Cardiac septum (tissue), 1 donor: ENCODE measurements at regions of chr7 and their contacts with region 1.

Region 1: GRCh38 chr7:135147899-135148721 is at the start of gene TMEM140:
- DNase-seq: no peak
- total RNA-seq, gene TMEM140: 15.2 TPM

Region 2: DNA sequence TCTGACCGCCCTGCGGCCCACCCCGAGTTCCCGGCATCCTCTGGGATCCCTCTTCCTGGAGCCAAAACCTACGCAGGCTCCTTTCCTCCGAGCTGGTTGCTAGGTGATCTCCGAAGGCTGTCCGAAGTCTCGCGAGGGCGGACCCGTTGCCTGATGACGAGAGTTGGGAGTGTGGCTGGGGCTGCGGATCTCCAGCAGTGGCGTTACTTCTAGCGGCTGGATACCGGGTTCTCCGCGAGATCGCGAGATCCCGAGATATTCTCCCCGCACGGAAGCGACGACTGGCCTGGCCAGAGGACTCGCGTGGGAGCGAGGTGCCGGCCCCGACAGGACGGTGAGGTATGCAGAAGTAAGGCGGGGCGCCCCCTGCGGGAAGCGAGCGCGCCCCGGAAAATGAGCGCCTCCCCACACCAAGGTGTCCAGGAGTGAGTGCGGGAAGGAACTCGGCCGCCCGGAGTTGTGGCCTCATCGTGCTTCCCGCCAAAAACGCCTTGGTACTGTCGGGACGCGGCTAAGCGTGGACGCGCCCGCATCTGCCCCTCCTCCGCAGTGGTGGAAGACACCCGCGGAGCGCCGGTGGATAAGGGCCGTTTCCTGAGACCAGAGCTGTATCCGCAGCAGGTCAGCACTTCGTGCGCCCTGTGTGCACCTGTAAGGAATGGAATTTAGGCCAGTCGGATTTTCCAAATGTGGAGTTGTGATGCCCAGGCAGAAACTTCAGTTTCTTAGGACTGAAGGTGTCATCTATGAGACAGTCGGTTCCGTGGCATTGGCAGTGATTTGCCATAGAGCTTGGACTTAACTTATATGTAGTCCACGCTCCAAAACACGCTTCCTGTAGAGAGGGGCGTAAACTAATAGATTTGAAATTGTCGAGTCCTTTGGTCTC is 161.5 kb before region 1 on chr7 and contains the start of gene AGBL3:
- intact Hi-C with region 1: loop called (anchors 5 kb)
- DNase-seq: peak; percentile 96
- total RNA-seq, gene AGBL3: 1.4 TPM

Region 3: GRCh38 chr7:135160098-135160857 is 12.2 kb after region 1 on chr7:
- intact Hi-C with region 1: loop called (anchors 2 kb)
- DNase-seq: no peak

Region 4: GRCh38 chr7:135170274-135170997 is 22.3 kb after region 1 on chr7 and contains the start of gene CYREN:
- intact Hi-C with region 1: loop called (anchors 1 kb)
- DNase-seq: peak; percentile 97
- total RNA-seq, gene CYREN: 24.0 TPM

Region 5: GRCh38 chr7:135238112-135238744 is 90.1 kb after region 1 on chr7:
- intact Hi-C with region 1: no loop called
- DNase-seq: no peak

Region 6: DNA sequence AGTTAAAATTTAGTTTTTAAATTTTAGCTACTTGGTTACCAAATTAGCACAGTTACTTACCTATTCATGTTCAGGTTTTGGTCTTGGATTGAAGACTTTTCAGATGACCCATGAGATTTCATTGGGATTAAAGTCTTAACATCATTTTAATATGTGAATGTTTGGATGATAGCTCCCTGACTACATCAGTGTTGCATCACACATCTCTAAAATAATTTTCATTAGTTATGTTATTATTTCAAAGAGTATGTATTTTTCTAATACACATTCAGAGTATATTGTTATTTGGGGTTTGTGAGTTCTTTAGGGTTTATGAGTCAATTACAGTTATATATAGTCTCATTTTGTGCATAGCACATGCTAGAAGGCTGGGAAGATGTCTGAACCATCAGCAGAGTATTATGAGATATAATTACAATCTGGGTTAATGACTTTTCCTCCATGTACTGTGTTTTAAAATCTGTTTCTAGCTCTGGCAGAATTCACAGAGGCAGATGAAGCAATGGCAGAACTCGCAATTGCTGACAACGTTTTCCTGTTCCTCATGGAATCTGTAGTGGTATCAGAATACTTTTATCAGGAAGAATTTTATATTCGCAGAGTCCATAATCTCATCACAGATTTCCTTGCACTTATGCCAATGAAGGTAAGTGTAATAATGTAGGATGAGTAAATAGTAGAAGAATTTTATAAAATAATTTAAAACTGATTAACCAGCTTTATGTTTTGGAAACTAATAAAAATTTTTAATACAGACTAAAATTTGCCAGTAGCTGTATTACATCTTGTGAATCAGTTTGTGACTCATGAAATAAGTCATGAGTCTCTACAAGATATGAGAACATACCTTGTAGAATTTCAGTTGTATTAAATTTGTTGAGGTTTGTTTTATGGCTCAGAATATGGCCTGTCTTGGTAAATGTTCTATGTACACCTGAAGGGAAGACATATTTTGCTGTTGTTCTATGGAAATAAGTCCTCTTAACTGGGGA is 436.5 kb after region 1 on chr7:
- intact Hi-C with region 1: no loop called
- DNase-seq: no peak

Region 7: DNA sequence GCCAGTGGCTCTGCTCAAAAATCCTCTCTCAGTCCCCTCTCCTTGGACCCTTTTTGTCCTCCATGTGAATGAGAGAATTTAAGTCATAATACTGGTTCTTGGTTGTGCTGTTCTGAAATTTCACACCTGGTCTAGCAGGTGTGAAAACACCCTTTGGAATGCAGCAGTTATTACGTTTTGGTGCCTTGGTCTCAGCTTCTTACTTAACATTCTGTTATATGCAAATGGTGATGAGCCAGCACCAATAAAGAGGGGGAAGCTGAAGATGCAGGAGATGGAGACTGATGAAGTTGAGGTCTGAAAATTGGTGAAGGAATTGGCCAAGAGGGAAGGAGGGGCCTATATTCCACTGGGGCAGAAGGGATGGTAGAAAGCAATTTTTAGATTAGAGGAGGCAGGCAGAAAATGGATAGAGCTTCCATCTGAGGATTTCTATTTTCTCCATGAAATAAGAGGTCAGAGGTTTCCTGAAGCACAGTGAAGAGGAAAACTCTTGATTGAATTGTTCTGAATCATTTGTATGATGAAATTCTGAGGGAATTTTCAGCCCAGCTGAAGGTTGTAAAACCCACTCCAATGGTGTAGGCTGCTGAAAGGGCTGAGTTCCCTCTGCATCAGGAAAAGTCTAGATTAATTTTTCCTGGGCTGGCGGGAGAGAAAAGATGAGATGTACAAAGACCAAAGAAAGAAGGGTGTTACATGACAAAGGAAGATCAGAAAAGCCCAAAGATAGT is 694.5 kb after region 1 on chr7:
- intact Hi-C with region 1: no loop called
- DNase-seq: no peak